GM10248 (cell line): ENCODE measurements at regions of chr20 and their contacts with region 1.

Region 1: DNA sequence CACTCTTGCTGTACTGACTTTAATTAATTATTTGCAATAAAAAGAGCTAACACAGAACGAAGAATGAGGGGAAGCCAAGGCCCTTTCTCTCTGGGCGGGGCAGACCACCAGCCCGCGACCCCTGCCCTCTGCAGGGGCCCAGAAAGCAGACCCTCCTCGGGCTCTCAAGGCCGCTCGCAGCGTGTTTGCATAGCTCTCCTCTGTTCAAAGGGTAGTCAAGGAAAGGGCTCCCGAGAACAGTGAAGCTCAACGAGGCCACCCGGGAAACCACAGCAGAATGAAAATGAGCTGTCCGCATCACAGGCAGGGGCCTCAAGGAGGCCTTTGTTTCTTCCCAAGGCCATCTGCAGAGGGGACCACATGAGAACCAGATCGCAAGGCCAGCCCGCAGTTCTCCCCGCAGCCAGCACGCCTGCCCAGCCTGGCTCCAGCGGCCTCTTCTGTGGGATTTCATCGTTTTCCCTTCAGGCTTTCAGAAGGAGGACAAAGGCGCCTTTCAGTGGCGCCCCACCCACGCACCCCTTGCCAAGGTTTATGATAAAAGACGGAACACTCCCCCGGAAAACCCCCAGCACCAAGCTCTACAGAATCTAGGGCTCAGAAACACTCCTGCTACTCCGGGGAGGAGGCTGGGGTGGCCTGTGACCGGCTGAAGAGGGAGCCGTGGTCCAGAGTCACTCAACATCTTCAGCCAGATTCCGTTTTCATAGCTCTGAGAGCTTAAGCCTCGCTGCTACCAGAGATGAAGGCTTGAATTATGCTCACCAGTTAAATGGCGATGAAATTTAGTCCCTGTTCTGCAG is 25.3 kb downstream of the ACSS1 start:
- DNase-seq: no peak
- CTCF ChIP-seq: no peak

Region 2: DNA sequence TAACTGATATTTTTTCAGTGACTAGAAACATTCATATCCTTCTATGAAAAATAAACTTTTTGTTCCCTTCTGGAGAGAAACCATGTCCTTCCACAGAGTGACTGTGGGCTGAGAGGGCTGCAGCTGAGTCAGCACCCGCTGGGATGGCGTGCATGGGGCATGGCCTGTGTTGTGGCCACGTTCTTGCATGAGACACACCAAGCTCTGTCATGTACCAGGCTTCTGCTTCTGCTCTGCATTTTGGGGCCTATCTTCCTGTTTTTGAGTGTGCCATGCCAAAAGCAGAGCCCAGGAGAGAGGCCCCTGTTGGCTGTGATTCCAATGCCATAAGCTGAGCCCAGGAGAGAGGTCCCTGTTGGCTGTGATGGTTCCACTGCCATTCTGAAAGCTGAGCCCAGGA is 50.9 kb before region 1 on chr20:
- CTCF ChIA-PET with region 1: no interaction called
- POLR2A ChIA-PET with region 1: no interaction called
- DNase-seq: no peak
- CTCF ChIP-seq: no peak

Region 3: DNA sequence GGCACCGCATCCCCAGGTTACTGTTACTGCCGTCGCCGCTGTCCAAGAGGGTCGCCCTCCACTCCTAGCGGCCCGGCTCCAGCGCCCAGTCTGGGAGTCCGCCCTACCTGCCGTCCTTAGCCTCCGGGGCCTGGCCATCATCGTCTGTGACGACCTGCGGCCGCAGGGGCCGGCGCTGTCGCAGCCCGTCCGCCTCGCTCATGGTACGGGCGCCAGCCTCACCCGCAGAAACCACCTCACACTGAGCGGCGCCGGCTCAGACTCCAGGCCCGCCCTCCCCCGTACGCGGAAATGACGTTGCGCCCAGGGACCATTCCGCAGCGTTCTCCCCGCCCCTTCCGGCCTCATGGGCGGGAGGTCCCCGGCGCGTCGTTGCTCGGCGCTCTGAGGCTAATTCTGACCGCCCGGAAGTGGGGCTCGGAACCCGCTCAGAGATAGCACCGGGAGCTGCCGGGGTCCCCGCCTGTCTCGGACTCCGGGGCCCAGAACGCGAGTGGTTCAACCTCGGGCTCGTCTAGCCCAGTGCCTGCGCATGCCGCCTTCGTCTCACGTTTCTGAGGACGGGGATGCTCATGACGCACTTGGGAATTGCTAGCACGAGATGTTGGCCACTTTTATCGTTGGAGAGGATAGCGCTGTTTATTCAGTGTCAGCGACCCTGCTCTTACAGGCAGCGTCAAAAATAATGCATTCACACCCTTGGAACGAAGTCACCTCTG is 40.0 kb before region 1 on chr20 and contains the start of gene APMAP:
- CTCF ChIA-PET with region 1: interaction called, 21 read pairs
- POLR2A ChIA-PET with region 1: no interaction called
- DNase-seq: peak; percentile 98
- CTCF ChIP-seq: no peak

Region 4: GRCh38 chr20:25020901-25021735 is 11.6 kb before region 1 on chr20:
- CTCF ChIA-PET with region 1: interaction called, 12 read pairs
- POLR2A ChIA-PET with region 1: no interaction called
- DNase-seq: no peak
- CTCF ChIP-seq: no peak

Region 5: DNA sequence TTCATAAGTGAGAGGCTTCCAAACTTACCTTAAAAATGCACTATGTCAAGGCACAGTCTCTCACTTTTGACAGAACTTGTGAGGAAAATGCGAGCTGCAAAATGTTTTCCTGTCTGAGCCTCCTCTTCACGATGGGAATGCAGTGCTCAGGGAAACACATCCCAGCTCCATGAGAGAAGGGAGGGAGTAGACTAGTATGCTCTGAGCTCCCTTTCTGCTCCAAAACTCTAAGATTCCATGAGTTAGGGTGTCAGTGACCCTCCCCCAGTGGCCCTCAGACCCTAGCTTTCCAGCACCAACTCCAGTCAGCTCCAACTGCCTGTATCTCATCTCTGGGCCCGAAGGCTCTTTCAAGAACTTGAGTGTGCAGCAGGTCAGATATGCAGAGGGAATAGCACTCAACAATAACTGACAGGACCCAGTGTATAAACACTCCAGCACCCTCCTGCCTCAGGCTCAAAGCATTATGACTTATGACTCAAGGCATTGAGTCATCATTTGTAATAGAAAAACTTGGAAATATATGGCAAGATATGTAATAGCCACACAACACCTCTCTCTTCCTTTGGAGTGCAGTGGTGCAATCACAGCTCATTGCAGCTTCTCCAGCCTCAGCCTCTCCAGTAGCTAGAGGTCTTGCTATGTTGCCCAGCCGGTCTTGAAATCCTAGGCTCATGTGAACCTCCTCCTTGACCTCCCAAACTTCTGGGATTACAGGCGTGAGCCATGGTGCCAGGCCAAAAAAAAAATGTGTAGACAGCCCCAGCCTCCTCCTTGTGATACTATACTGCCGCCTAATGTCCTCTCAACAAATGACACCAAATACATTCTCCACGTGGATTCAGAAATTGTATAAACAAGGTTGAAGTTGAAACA is 146.1 kb after region 1 on chr20:
- CTCF ChIA-PET with region 1: no interaction called
- POLR2A ChIA-PET with region 1: no interaction called
- DNase-seq: peak; percentile 59
- CTCF ChIP-seq: peak; percentile 66